ENCODE measurements at regions of chr1 and their contacts with region 1.

Region 1: DNA sequence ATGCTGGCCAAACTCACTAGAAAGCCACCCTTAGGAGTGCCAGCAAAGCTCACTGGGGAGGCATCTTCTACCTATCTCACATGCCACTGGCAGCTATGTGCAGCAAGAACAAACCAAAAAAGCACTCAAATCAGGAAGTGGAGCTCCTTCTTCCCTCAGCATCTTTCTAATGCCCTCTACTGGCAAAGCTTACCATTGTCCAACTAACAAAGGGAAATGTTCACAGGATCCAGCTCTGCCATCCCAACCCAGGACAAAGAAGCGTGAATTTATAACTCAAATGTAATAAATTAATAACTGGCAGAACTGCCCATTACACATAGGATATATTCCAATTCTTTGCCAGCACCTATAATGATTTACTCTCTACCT is 38.9 kb downstream of the LEPR start:
- DNase-seq: no peak
- H3K4me3 Mint-ChIP-seq: no peak overlapping the region
- H3K27ac Mint-ChIP-seq: no peak overlapping the region
- H3K4me1 Mint-ChIP-seq: peaks cover 14% of the 10 kb centered on the region
- H3K27me3 Mint-ChIP-seq: no peaks in the 10 kb centered on the region

Region 2: GRCh38 chr1:65431111-65431705 is 28.2 kb before region 1 on chr1:
- CTCF ChIA-PET with region 1: interaction called, 7 read pairs
- POLR2A ChIA-PET with region 1: no interaction called
- intact Hi-C with region 1: loop called (anchors 2 kb)
- DNase-seq: no peak
- H3K4me3 Mint-ChIP-seq: no peak overlapping the region
- H3K27ac Mint-ChIP-seq: no peak overlapping the region
- H3K4me1 Mint-ChIP-seq: peaks cover 5% of the 10 kb centered on the region
- H3K27me3 Mint-ChIP-seq: no peaks in the 10 kb centered on the region

Region 3: GRCh38 chr1:65469889-65470340 is 10.5 kb after region 1 on chr1:
- CTCF ChIA-PET with region 1: interaction called, 10 read pairs
- POLR2A ChIA-PET with region 1: no interaction called
- intact Hi-C with region 1: no loop called
- DNase-seq: no peak
- H3K4me3 Mint-ChIP-seq: no peak overlapping the region
- H3K27ac Mint-ChIP-seq: no peak overlapping the region
- H3K4me1 Mint-ChIP-seq: no peaks in the 10 kb centered on the region
- H3K27me3 Mint-ChIP-seq: no peaks in the 10 kb centered on the region

Measured in activated CD4-positive, alpha-beta memory T cell treated with anti-CD3 and anti-CD28 coated beads for 36 hours (primary cell).